Psoas muscle (tissue), 8 donors: ENCODE measurements at regions of chr2 and their contacts with region 1.

Region 1: DNA sequence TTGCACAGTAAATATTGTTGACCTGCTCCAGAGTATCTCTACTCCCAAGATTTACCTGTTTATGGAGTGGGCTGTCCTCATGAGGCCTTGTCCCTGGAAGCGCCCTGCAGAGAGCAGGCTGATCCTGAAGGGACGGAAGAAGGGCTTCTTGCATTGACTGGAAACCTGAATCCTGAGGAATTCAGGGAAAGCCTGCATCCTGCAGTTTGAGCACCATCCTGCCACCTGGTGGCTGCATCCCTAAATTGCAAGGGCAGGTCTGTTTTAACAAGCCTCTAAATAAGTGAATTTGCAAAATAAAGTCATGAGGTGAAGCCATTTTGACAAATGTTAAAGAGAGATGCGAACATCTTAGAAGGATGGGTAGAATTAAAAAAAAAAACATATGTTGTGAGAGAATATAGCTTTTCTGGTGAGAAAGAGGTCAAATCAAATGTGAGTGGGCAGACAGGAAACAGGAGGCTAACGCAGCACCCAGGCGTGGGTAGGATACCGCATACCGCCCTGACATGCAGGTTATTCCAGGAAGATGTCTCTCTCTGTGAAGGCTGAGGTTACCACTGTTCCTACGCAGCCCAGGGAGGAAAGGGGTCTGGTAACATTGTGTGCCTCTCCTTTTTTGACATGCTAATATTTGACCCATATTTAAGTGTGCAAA is 754.9 kb downstream of the RNF144A start:
- DNase-seq: peak in 1 of 2 donors; percentile 24
- ATAC-seq: no peak
- H3K4me3 ChIP-seq: no peak overlapping the region
- H3K27ac ChIP-seq: no peak overlapping the region
- H3K4me1 ChIP-seq: no peaks in the 10 kb centered on the region
- H3K27me3 ChIP-seq: no peaks in the 10 kb centered on the region
- CTCF ChIP-seq: peak; percentile 41

Region 2: GRCh38 chr2:7097348-7097895 is 574.7 kb before region 1 on chr2:
- intact Hi-C with region 1: loop called in 1 of 2 experiments (anchors 5 kb)
- DNase-seq: peak; percentile 76 to 86
- ATAC-seq: peak; percentile 88 to 97 (median 89)
- H3K4me3 ChIP-seq: peak overlapping the region; percentile 26
- H3K27ac ChIP-seq: no peak overlapping the region
- H3K4me1 ChIP-seq: no peaks in the 10 kb centered on the region
- H3K27me3 ChIP-seq: no peaks in the 10 kb centered on the region
- CTCF ChIP-seq: peak; percentile 99

Region 3: DNA sequence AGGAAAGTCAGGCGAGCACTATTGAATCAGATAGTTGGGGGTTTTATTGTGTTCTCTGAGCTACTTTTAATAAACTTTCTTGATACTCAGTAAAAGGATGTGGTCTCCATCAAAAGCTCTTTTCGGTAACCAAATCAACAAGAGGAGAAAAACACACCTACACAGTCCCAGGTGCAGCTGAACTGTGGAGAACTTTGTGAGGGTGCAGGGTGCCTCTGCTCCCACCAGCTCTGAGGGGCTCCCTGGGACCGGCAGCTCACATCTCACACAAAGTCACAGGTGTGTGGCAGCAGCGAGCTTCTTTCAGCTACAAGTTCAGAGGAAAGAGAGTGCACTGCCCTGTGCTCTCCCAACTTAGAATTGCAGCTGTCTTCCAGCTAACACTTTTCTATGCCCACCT is 104.5 kb before region 1 on chr2:
- intact Hi-C with region 1: no loop called
- DNase-seq: no peak
- ATAC-seq: no peak
- H3K4me3 ChIP-seq: no peak overlapping the region
- H3K27ac ChIP-seq: no peak overlapping the region
- H3K4me1 ChIP-seq: no peaks in the 10 kb centered on the region
- H3K27me3 ChIP-seq: no peaks in the 10 kb centered on the region
- CTCF ChIP-seq: no peak